T-cell (primary cell): ENCODE measurements at regions of chr17 and their contacts with region 1.

Region 1: DNA sequence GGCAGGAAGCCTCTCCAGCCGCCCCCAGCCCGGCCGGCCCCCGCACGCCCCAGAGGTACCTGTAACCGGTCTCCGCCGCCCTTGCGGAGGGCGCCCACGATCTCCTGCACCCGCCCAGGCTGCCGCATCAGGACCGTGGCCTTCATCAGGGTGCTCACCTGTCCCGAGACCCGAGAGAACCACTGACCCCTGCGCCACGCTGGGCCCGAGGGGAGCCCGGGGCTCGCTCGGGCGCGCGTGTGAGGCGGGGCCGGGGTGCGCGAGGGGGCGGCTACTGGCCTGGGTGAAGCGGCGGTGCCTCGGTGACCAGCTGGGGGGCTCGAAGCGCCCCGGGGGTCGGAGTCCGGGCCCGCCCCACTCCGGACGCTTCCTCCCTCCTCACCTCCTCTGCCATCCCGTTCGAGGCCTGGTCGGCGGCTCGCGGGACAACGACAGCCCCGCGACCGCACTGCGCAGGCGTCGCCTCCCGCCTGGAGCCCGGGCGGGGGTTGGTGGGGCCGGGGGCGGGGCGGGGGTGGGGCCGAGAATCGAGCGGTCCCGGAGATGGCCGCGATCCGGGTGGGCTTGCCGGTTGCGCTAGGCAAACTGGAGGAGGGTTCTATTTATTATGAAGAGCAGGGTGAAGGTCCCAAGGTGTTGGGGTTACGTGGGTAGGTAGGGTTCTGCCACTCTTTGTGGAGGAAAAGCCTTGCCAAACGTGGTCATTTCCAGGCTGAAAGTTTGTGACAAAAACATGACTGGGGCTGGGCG is at the start of gene NT5C3B:
- DNase-seq: peak in 33 of 35 experiments; percentile 7 to 69 (median 35)
- ATAC-seq: peak; percentile 88 to 92 (median 90)
- H3K4me3 ChIP-seq: peak within 1 kb of the TSS; percentile 64 to 68
- H3K4me3 Mint-ChIP-seq: peak within 1 kb of the TSS; percentile 75 to 84 (median 81)
- H3K27ac ChIP-seq: no peak within 1 kb of the TSS
- H3K27ac Mint-ChIP-seq: peak within 1 kb of the TSS in 1 of 2 donors; percentile 82
- H3K4me1 ChIP-seq: peaks cover 3 to 16% of the 10 kb centered on the region in 2 experiments
- H3K4me1 Mint-ChIP-seq: peaks cover 11 to 21% (median 21%) of the 10 kb centered on the region in 3 donors
- H3K27me3 ChIP-seq: no peaks in the 10 kb centered on the region
- H3K27me3 Mint-ChIP-seq: peaks cover 0 to 3% of the 10 kb centered on the region in 2 donors
- total RNA-seq, gene NT5C3B: 25.4 to 43.0 (median 33.4) TPM

Region 2: GRCh38 chr17:41824086-41824485 is 11.9 kb before region 1 on chr17:
- CTCF ChIA-PET with region 1: no interaction called
- POLR2A ChIA-PET with region 1: interaction called in 1 of 2 experiments, 12 read pairs
- DNase-seq: no peak
- ATAC-seq: no peak
- H3K4me3 ChIP-seq: no peak overlapping the region
- H3K4me3 Mint-ChIP-seq: no peak overlapping the region
- H3K27ac ChIP-seq: no peak overlapping the region
- H3K27ac Mint-ChIP-seq: no peak overlapping the region
- H3K4me1 ChIP-seq: no peaks in the 10 kb centered on the region
- H3K4me1 Mint-ChIP-seq: no peaks in the 10 kb centered on the region
- H3K27me3 ChIP-seq: peaks cover 0 to 8% of the 10 kb centered on the region in 2 experiments
- H3K27me3 Mint-ChIP-seq: peaks cover 0 to 2% of the 10 kb centered on the region in 2 donors

Region 3: GRCh38 chr17:41918314-41919164 is 82.6 kb after region 1 on chr17 and contains the start of gene ACLY:
- CTCF ChIA-PET with region 1: no interaction called
- POLR2A ChIA-PET with region 1: interaction called in 1 of 2 experiments, 10 read pairs
- DNase-seq: peak; percentile 85 to 96 (median 90)
- ATAC-seq: peak; percentile 99
- H3K4me3 ChIP-seq: peak within 1 kb of the TSS; percentile 77 to 100
- H3K4me3 Mint-ChIP-seq: peak within 1 kb of the TSS; percentile 88 to 93 (median 91)
- H3K27ac ChIP-seq: peak within 1 kb of the TSS; percentile 57
- H3K27ac Mint-ChIP-seq: peak within 1 kb of the TSS; percentile 74 to 85
- H3K4me1 ChIP-seq: peaks cover 6 to 49% of the 10 kb centered on the region in 2 experiments
- H3K4me1 Mint-ChIP-seq: peaks cover 34 to 39% (median 38%) of the 10 kb centered on the region in 3 donors
- H3K27me3 ChIP-seq: no peaks in the 10 kb centered on the region
- H3K27me3 Mint-ChIP-seq: no peaks in the 10 kb centered on the region
- total RNA-seq, gene ACLY: 69.1 to 101 (median 96.3) TPM

Region 4: DNA sequence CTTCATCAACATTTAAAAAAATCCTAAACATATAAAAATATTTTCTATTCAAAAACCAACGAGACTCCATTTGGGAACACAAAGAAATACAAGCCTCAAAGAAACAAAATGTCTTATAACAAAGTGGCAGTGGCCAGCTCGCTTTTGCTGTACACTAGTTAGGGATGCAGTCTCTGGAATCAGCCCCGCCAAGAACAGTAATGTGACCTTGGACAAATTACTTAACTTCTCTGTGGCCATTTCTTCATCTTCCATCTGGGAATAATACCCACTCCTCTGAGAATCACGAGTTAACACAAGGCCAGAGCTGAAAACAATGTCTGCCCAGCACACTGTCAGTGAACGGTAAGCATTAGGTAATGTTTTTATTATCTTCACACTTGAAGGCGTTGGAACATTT is 434.6 kb after region 1 on chr17:
- CTCF ChIA-PET with region 1: no interaction called
- POLR2A ChIA-PET with region 1: no interaction called
- DNase-seq: no peak
- ATAC-seq: no peak
- H3K4me3 ChIP-seq: no peak overlapping the region
- H3K4me3 Mint-ChIP-seq: peak overlapping the region; percentile 95 to 100 (median 96)
- H3K27ac ChIP-seq: peak overlapping the region; percentile 87
- H3K27ac Mint-ChIP-seq: peak overlapping the region; percentile 92 to 95
- H3K4me1 ChIP-seq: peaks cover 32 to 59% of the 10 kb centered on the region in 2 experiments
- H3K4me1 Mint-ChIP-seq: peaks cover 78 to 86% (median 82%) of the 10 kb centered on the region in 3 donors
- H3K27me3 ChIP-seq: no peaks in the 10 kb centered on the region
- H3K27me3 Mint-ChIP-seq: no peaks in the 10 kb centered on the region